ENCODE measurements at regions of chr5 and their contacts with region 1.

Region 1: DNA sequence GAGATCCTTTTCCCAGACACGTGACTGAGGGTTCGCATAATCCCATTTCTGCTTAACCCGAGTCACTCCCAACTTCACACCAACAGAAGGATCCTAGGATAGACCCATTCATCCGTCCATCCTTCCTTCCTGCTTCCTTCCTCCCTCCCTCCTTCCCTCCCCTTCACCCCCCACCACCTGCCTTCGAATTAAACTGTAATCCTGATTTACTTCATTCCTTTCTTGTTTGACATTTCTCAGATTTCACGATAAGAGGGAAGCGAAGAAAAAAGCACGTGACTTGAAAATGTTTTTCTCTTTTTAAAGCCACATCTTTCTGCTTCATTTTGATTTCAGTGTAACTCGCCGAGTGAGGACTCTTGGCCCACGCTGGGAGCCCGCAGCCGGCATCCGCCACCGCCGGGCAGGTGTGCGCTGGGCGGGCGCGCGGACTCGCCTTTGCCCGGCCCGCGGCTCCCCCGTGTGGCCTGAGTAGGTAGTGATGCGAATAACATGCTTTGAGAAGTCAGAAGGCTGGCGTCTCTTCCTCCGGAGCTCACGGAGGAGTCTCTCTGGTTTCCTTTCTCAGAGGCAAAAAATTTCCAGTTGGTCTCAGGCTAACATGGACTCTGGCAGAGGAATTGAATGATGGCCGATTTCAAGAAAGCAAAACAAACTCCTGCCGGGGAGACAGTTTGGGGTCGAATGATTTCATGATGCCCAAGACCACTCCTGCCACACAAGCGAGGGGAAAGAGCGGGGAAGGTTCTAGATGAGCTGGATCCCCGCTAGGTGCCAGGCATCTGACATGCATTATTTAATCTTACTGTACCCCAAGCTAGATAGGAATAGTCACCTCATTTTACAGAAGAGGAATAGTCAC is 117.7 kb downstream of the SLC12A2 start:
- DNase-seq: peak; percentile 83
- ATAC-seq: peak; percentile 84 to 88

Region 2: GRCh38 chr5:127564002-127564769 is 637.1 kb before region 1 on chr5:
- intact Hi-C with region 1: loop called (anchors 2 to 5 kb)
- DNase-seq: no peak
- ATAC-seq: peak; percentile 47 to 75

Region 3: DNA sequence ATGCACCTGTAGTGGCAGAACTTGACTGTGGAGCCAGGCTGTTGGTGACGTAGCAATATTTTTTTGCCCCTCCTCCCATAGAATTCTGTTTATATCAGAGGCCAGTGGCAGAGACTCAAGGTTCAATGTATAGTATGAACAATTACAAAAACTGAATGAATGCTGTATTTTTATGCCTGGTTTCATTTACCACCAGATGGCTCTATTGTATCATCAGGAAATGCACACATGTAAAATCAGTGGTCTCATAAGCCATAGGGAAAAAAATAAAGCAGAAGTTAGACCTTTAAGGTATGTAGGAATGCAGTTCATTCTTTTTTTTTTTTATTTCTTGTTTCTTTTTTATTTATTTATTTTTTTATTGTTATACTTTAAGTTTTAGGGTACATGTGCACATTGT is 454.5 kb before region 1 on chr5:
- intact Hi-C with region 1: loop called in 1 of 2 experiments (anchors 5 kb)
- DNase-seq: no peak
- ATAC-seq: no peak

Region 4: DNA sequence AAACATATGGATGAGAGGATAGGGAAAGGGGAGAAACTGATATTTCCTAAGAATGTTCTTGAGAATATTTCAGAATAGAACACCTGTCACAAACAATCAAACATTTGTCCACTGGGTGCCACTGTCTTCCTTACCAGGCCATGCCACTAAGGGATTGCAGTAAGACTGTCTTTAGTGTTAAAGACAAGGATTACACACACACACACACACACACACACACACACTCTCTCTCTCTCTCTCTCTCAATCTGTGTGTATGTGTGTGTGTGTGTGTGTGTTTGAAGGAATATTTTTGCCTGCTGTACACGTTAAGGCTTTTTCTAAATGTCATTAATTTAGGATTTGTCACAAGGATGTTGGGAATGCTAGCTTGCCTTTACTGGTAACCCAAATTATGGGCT is 443.7 kb before region 1 on chr5:
- intact Hi-C with region 1: loop called in 1 of 2 experiments (anchors 5 kb)
- DNase-seq: peak; percentile 23
- ATAC-seq: peak in 1 of 2 donors; percentile 51

Region 5: DNA sequence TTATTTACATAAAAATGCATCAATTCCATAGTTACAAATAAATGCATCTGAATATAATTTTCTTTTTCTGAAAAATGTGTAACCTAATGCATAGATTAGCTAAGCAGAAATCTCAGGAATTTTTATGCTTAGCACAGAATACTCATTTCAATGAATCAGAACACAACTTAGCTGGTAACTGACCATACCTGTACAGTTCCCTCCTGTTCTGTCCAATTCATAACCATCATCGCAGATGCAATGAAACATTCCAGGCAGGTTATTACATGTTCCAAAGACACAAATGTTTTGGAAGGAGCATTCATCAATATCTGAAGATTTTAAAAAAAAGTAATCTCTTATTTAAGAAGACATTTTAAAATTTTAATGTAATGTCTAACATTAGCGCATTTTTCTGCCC is 117.4 kb after region 1 on chr5:
- intact Hi-C with region 1: no loop called
- DNase-seq: no peak
- ATAC-seq: no peak